Thyroid gland (tissue), 4 donors: ENCODE measurements at regions of chrX and their contacts with region 1.

Region 1: DNA sequence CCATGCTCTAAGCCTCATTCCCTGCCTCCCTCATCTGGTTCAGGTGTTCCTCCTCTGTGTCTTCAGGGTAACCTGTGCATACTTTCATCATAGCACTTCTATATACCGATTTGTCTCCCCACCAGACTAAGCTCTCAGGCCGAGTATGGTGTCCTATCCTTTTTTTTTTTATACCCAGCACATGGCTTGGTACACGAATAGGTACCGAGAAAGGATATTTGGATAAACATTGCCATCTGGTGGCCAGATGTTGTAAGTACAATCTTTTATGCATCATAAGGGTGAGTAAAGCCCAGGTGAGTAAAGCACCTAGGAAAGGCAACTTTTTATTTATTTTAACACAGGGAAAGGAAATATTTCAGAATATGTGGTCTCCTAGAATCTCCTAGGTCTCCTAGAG is 68.4 kb downstream of the MID2 start:
- DNase-seq: no peak
- H3K4me3 ChIP-seq: no peak overlapping the region
- H3K27ac ChIP-seq: no peak overlapping the region
- H3K4me1 ChIP-seq: no peaks in the 10 kb centered on the region
- H3K27me3 ChIP-seq: no peaks in the 10 kb centered on the region
- CTCF ChIP-seq: peak in 5 of 6 experiments; percentile 43 to 63 (median 47)
- POLR2A ChIP-seq: no peak

Region 2: DNA sequence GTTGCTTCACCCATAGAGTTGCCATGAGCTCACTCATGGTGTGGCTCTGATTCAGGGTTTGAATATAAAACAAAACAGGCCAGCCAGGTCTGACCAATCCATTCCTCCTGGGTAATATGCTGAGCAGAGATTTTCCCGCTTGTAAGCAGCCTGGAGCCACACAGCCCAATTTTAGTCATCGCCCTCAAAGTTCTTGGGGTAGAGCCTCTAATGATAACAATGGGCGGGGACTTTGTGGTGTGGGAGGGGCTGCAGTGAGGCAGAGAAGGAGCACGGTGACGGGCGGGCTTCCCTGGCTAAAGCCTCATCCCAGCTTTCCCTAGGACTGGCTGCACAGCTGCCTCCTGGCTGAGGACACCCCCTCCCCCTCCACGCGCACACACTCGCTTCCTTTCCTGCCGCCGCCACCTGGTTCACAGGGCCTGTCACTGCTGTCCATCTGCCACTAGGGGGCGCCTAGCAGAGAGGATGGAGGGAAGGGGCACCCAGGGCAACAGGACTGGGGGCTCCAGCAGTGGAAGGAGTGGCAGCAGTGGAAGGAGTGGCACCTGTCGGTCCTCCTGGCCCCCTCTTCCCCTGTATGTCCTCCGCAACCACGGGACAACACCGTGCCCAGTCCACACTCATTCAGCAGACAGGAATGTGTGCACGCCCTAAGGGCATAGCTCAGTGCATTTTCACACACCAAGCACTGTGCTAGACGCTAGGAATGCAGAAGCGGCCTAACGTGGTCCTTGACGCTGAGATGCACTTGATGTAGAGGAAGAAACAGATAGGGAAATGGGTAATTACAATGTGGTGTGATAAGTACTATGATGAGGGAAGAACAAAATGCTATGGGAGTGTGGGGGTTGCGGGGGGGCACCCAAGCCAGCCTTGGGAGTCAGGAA is 238.9 kb before region 1 on chrX:
- intact Hi-C with region 1: loop called (anchors 10 kb)
- DNase-seq: peak; percentile 80 to 82
- H3K4me3 ChIP-seq: peak overlapping the region in 1 of 3 donors; percentile 9
- H3K27ac ChIP-seq: peak overlapping the region; percentile 64 to 86 (median 84)
- H3K4me1 ChIP-seq: peaks cover 0 to 9% of the 10 kb centered on the region in 2 donors
- H3K27me3 ChIP-seq: no peaks in the 10 kb centered on the region
- CTCF ChIP-seq: peak; percentile 19 to 78 (median 60)
- POLR2A ChIP-seq: peak in 1 of 2 donors; percentile 35